Activated T-helper 1 cell treated with anti-CD3 and anti-CD28 coated beads, Interleukin-12 subunit alpha, Interleukin-12 subunit beta, Interleukin-2, Interleukin-4 antibody, amounts not matched to agents 30 ng/mL and 10 ng/mL and 1 ng/mL, durations not matched to agents 14 hours and 24 hours and 36 hours (primary cell): ENCODE measurements at regions of chr12 and their contacts with region 1.

Region 1: DNA sequence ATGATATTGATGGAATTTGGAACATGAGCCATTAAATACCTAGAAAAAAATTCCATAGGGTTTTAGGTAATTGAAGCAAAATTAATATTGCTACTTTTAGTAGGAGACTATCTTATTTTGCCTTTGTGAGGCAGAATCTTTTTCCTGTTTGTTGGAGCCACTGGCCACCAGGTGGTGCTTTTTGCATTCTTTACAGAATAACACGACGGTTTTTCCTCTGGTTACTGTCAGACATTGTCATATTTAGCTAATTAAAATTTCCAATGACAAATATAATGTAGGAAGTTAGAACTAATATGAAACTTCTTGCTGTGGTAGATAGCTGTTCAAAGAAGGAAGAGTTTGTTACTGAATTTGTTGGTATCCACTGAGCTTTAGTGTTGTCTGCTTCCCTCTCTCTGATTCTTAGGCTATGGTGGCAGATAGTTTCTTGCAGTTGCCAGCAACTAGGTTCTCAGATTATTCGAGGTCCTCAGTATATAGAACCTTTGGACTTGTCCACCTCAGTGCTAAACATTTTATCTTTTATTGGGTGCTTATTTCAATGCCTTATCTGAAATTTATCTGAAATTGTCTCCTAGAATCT is 25.7 kb downstream of the RAB21 start:
- DNase-seq: no peak
- H3K4me3 Mint-ChIP-seq: no peak overlapping the region
- H3K27ac Mint-ChIP-seq: no peak overlapping the region
- H3K4me1 Mint-ChIP-seq: peaks cover 11% of the 10 kb centered on the region
- H3K27me3 Mint-ChIP-seq: no peaks in the 10 kb centered on the region

Region 2: GRCh38 chr12:71754461-71755145 is 25.7 kb before region 1 on chr12 and contains the start of gene RAB21:
- intact Hi-C with region 1: loop called (anchors 2 kb)
- DNase-seq: peak; percentile 97
- H3K4me3 Mint-ChIP-seq: peak within 1 kb of the TSS; percentile 93
- H3K27ac Mint-ChIP-seq: peak within 1 kb of the TSS; percentile 97
- H3K4me1 Mint-ChIP-seq: peaks cover 22% of the 10 kb centered on the region
- H3K27me3 Mint-ChIP-seq: peaks cover 27% of the 10 kb centered on the region
- total RNA-seq, gene RAB21: 100 and 105 TPM in 2 replicates

Region 3: GRCh38 chr12:71846322-71846940 is 66.1 kb after region 1 on chr12:
- intact Hi-C with region 1: loop called (anchors 1 kb)
- DNase-seq: no peak
- H3K4me3 Mint-ChIP-seq: no peak overlapping the region
- H3K27ac Mint-ChIP-seq: no peak overlapping the region
- H3K4me1 Mint-ChIP-seq: peaks cover 9% of the 10 kb centered on the region
- H3K27me3 Mint-ChIP-seq: no peaks in the 10 kb centered on the region

Region 4: DNA sequence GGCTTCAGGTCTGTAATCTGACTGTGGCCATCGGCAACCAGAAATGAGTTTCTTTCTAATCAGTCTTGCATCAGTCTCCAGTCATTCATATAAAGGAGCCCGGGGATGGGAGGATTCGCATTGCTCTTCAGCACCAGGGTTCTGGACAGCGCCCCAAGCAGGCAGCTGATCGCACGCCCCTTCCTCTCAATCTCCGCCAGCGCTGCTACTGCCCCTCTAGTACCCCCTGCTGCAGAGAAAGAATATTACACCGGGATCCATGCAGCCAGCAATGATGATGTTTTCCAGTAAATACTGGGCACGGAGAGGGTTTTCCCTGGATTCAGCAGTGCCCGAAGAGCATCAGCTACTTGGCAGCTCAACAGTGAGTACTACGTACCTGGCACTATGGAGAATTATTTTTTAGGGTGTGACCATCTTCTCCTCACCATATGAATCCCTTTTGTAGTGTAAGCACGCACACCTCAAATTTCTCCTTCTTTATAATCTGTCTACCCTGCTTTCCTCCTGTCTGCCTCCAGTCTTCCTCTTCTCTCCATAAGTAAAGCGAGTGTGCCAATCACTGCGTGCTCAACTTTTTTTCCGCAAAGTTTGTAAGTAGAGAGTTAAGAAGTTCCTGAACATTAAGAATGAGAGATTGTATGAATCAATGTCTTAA is 158.5 kb after region 1 on chr12 and contains the start of gene TPH2:
- intact Hi-C with region 1: loop called (anchors 1 kb)
- DNase-seq: peak; percentile 51
- H3K4me3 Mint-ChIP-seq: no peak within 1 kb of the TSS
- H3K27ac Mint-ChIP-seq: peak within 1 kb of the TSS; percentile 1
- H3K4me1 Mint-ChIP-seq: peaks cover 18% of the 10 kb centered on the region
- H3K27me3 Mint-ChIP-seq: peaks cover 28% of the 10 kb centered on the region
- total RNA-seq, gene TPH2: not detected in 2 replicates